Posterior vena cava (tissue), 2 donors: ENCODE measurements at regions of chr2 and their contacts with region 1.

Region 1: DNA sequence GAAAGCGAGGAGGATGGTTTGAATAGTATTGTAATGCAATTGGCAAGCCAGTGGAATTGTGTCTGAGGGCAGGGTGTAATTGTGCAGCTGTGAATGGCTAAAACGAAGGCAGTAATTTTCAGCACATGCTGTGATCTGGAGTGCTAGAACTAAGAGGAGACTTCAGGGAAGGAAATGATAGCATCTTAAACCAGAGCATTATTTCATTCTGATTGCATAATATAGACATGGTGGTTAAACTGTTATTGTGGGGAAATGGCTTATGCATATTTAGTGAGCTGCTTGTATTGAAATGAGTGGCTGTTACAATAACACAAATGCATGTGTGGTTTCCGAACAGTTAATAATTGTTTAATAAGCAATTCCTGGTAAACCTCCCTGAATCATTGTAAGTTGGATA is 36.3 kb downstream of the THSD7B start:
- DNase-seq: no peak

Region 2: DNA sequence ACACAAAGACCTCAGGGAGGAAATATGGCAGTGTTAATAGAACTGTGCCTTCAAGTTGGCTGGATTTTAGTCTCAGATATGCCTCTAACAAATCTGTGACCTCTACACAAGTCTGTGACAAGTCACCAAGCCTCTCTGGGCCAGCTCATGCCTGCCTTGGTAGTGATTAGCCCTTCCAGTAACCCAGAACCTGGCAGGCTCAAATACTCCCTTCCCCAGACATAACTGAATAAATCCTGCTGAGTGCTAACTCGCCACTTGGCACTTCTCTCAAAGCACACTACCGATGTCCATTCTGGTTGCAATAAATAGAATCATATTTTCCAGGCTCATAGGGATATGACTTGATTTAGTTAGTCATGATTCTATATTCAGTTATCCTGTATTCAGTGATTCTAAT is 51.6 kb before region 1 on chr2:
- intact Hi-C with region 1: loop called in 1 of 2 experiments (anchors 2 kb)
- DNase-seq: no peak

Region 3: DNA sequence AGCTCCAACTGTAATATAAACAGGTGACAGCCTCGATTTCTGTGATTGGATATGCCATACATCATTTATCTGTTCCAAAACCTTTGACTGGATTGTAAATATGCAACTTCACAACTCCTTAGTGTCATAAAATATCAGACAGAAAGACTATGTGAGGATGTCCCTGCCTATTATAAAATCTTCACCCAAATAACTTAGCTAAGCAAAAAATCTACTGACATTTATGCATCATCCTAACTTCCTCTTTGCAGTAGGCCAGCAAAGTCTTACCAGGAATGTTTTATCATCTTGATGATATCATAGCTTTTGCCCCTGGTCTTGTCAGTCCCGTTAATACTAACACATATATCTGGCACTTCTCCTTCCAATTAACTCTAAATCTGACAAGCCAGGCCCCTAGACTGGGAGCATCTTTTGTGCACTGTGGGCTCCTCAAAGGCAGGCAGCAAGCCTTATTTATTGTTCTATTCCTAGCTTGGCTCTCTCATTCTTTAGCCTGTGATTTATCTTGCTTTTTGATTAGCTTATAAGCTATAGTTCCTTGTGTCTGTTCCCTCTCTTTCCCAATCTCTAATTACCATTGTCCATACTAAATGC is 806.1 kb after region 1 on chr2:
- intact Hi-C with region 1: loop called in 1 of 2 experiments (anchors 5 kb)
- DNase-seq: no peak